ENCODE measurements at regions of chr11 and their contacts with region 1.

Region 1: GRCh38 chr11:66268283-66268951 is at the start of gene RAB1B:
- DNase-seq: peak; percentile 100
- H3K4me3 ChIP-seq: peak within 1 kb of the TSS; percentile 100
- H3K27ac ChIP-seq: peak within 1 kb of the TSS; percentile 84
- H3K4me1 ChIP-seq: peaks cover 24% of the 10 kb centered on the region
- CTCF ChIP-seq: no peak
- total RNA-seq, gene RAB1B: 69.2 and 77.7 TPM in 2 replicates

Region 2: DNA sequence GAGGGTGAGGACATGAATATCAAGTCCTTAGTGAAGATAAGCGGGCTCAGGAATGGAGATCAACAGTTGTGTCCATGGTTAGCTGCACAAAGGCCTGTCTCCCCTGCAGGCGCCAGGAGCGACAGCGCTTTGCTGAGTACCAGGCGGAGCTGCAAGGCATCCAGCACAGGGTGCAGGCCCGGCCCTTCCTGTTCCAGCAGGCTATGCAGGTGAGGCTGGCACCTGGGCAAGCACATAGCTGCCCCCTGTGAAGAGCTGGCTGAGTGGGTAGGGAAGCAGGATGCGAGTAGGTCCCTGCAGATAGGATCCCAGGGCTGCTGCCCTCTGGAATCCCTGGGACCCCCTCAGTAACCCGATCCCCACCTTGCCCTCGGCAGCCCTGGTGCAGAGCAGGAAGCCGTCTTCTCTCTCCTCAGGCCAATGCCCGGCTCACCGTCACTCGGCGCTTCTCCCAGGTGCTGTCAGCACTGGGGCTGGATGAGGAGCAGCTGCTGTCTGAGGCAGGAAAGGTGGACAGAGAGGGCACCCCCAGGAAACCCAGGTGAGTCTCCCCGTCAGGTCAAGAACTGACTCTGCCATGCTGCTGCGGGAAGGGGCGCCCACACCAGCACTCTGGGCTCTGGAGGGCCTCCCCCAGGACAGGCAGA is 309.5 kb before region 1 on chr11:
- CTCF ChIA-PET with region 1: no interaction called
- POLR2A ChIA-PET with region 1: no interaction called
- intact Hi-C with region 1: no loop called
- DNase-seq: no peak
- H3K4me3 ChIP-seq: no peak overlapping the region
- H3K27ac ChIP-seq: no peak overlapping the region
- H3K4me1 ChIP-seq: peaks cover 27% of the 10 kb centered on the region
- CTCF ChIP-seq: no peak

Region 3: GRCh38 chr11:66119348-66120133 is 148.9 kb before region 1 on chr11:
- CTCF ChIA-PET with region 1: no interaction called
- POLR2A ChIA-PET with region 1: no interaction called
- intact Hi-C with region 1: no loop called
- DNase-seq: no peak
- H3K4me3 ChIP-seq: no peak overlapping the region
- H3K27ac ChIP-seq: no peak overlapping the region
- H3K4me1 ChIP-seq: peaks cover 48% of the 10 kb centered on the region
- CTCF ChIP-seq: no peak

Region 4: GRCh38 chr11:66207876-66208275 is 60.5 kb before region 1 on chr11:
- CTCF ChIA-PET with region 1: no interaction called
- POLR2A ChIA-PET with region 1: no interaction called
- intact Hi-C with region 1: no loop called
- DNase-seq: no peak
- H3K4me3 ChIP-seq: no peak overlapping the region
- H3K27ac ChIP-seq: no peak overlapping the region
- H3K4me1 ChIP-seq: no peaks in the 10 kb centered on the region
- CTCF ChIP-seq: no peak

Region 5: DNA sequence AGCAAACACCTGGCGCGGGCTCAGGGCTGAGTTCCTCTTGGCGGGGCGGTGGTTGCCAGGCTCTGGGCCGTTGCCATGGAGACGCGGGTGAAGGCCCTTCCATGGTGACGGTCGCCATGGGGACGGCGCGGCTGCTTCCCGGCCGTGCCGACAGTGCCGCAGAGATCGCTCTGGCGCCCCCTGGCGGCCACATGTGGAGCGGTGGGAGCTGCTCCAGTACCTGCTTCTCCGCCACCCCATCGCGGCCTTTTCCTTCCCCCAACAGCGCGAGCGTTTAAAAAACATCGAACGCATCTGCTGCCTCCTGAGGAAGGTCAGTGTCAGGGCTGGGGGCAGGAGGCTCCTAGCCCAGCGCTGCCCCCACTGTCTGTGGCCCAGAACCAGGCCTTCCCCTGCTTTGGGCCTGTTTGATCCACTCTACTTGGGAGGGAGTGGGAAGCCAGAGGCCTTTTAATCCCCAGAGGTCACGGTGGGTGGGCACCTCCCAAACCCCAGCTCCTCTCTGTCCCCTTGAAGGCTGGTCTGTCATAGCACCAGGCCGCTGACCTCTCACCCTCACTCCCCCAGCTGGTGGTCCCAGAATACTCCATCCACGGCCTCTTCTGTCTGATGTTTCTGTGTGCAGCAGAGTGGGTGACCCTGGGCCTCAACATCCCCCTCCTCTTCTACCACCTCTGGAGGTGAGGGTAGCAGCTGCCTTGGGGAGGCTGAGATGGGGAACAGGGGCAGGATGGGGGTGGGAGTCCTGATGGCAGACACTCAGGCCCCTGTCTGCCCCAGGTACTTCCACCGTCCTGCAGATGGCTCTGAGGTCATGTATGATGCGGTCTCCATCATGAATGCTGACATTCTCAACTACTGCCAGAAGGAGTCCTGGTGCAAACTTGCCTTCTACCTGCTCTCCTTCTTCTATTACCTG is 14.3 kb after region 1 on chr11:
- CTCF ChIA-PET with region 1: no interaction called
- POLR2A ChIA-PET with region 1: no interaction called
- intact Hi-C with region 1: loop called (anchors 1 kb)
- DNase-seq: peak; percentile 100
- H3K4me3 ChIP-seq: no peak overlapping the region
- H3K27ac ChIP-seq: no peak overlapping the region
- H3K4me1 ChIP-seq: peaks cover 40% of the 10 kb centered on the region
- CTCF ChIP-seq: peak; percentile 91

Measured in OCI-LY7 (cell line).